Activated T-helper 2 cell treated with anti-CD3 and anti-CD28 coated beads, Interferon-gamma antibody, Interleukin-2, Interleukin-4, amounts not matched to agents 10 μg/mL and 5 μg/mL and 100 μg/mL, durations not matched to agents 14 hours and 24 hours and 36 hours (primary cell): ENCODE measurements at regions of chr2 and their contacts with region 1.

Region 1: DNA sequence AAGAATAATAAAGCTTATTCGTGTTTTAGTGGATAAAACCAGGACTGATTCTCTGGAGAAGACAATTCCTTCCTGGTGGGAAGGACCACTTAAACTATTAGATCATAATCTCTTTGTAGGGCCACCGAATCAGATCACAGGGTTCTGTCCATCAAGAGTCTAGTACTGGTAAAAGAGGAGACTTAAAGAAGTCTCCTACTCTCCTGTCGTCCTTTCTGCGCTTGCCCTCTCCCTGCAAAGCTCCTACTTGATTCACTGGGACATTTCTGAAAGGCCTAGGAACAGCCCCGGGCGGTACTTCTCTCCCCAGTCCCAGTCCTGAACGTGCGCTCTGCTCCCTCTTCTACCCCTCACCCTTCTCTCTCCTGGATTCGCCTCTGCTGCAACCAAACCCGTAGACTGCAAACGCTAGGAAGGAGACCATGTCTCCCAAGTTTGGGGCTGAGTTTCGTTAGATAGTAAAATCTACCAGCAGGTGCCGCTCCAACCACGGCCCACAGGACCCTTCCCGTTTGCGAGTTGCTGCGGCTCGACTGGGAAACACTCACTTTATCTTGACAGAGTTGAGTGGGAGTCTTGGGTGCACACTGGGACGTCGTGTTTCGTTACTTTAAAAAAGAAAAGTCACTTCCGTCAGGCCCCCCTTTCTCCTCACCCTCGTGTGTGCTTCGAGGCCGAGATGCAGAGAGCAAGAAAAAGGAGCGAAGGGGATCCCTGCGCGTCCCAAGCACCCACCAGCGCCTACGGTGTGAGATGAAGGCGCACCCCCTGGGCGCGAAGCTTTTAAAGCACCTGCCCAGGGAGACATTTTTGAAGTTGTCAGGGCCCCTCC is 923 bp downstream of the FIGLA start:
- DNase-seq: peak; percentile 60
- H3K4me3 Mint-ChIP-seq: peak overlapping the region; percentile 67
- H3K27ac Mint-ChIP-seq: no peak overlapping the region
- H3K4me1 Mint-ChIP-seq: peaks cover 12% of the 10 kb centered on the region
- H3K27me3 Mint-ChIP-seq: peaks cover 62% of the 10 kb centered on the region

Region 2: DNA sequence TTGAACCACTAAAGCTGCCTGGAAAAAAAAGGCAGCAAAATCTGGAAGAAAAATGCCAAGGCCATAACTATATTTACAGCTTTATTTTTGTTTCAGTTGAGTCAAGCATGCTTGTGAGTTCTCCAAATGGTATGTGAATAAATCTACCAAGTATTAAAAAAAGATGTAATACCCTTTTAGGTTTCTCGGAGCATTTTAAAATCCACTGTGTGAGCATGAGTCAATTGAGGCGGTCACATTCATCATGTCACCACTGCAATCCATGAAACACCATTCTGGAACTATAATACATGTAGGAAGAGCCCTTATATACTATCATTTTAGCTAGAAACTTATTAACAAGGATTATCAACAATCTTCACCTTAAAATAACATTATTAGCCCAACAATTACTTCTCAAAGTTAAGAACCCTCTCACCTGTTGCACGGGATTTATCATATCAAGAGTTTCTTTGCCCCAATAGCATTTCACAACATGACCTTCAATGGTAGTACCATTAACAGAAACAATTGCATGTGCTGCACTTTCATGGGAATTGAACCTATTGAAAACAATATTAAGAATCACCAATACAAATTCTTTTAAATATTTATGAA is 574.5 kb before region 1 on chr2:
- intact Hi-C with region 1: no loop called
- DNase-seq: no peak
- H3K4me3 Mint-ChIP-seq: no peak overlapping the region
- H3K27ac Mint-ChIP-seq: no peak overlapping the region
- H3K4me1 Mint-ChIP-seq: peaks cover 19% of the 10 kb centered on the region
- H3K27me3 Mint-ChIP-seq: no peaks in the 10 kb centered on the region

Region 3: GRCh38 chr2:70301344-70302194 is 488.0 kb before region 1 on chr2 and contains the start of gene FAM136A:
- intact Hi-C with region 1: loop called (anchors 10 kb)
- DNase-seq: peak; percentile 86
- H3K4me3 Mint-ChIP-seq: peak within 1 kb of the TSS; percentile 88
- H3K27ac Mint-ChIP-seq: peak within 1 kb of the TSS; percentile 90
- H3K4me1 Mint-ChIP-seq: peaks cover 31% of the 10 kb centered on the region
- H3K27me3 Mint-ChIP-seq: no peaks in the 10 kb centered on the region
- total RNA-seq, gene FAM136A: 71.3 and 71.8 TPM in 2 replicates

Region 4: GRCh38 chr2:70553584-70554337 is 235.8 kb before region 1 on chr2 and contains the start of gene TGFA:
- intact Hi-C with region 1: loop called (anchors 10 kb)
- DNase-seq: peak; percentile 54
- H3K4me3 Mint-ChIP-seq: peak within 1 kb of the TSS; percentile 73
- H3K27ac Mint-ChIP-seq: no peak within 1 kb of the TSS
- H3K4me1 Mint-ChIP-seq: peaks cover 17% of the 10 kb centered on the region
- H3K27me3 Mint-ChIP-seq: peaks cover 60% of the 10 kb centered on the region
- total RNA-seq, gene TGFA: not detected in 2 replicates

Region 5: GRCh38 chr2:70656421-70657010 is 133.0 kb before region 1 on chr2:
- intact Hi-C with region 1: loop called (anchors 1 kb)
- DNase-seq: no peak
- H3K4me3 Mint-ChIP-seq: no peak overlapping the region
- H3K27ac Mint-ChIP-seq: no peak overlapping the region
- H3K4me1 Mint-ChIP-seq: peaks cover 15% of the 10 kb centered on the region
- H3K27me3 Mint-ChIP-seq: peaks cover 27% of the 10 kb centered on the region

Region 6: GRCh38 chr2:70748002-70748784 is 41.3 kb before region 1 on chr2:
- intact Hi-C with region 1: no loop called
- DNase-seq: no peak
- H3K4me3 Mint-ChIP-seq: no peak overlapping the region
- H3K27ac Mint-ChIP-seq: no peak overlapping the region
- H3K4me1 Mint-ChIP-seq: no peaks in the 10 kb centered on the region
- H3K27me3 Mint-ChIP-seq: peaks cover 4% of the 10 kb centered on the region

Region 7: DNA sequence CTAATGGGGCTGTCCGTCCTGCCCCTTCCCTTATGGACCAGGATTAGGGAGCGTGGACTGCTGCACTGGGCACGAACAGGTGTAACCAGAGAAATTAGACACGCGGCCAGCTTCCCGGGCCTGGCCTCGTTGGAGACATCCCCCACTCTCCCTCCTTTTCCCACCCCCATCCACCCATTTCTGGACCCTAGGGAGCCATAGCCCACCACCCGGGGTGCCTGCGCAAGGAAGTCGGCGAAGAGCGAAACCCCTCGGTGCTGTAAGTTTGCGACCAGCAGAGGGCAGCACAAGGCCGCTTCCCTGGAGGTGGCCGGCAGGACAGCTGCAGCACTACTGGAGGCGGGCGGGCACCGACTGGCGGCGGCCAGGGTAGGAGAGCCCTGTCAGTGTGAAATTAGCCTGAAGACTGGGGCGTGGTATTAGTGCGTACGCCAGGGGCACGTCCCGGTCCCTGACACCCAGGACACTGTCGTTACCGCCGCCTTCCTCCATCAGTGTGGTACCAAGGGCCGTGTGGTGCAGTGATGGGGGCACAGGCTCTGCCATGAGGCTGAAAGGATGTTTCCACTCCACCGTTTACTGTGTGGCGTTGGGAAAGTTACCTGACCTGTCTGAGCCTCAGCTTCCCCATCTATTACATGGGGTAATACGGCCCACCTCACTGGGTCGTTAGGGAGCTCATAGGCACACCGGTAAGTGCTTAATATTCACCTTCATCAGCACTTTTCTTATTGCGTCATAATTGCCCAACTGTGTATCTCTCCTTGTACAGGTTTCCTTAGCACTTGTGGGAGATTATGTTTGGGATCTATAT is 82.1 kb after region 1 on chr2:
- intact Hi-C with region 1: loop called (anchors 5 kb)
- DNase-seq: peak; percentile 68
- H3K4me3 Mint-ChIP-seq: no peak overlapping the region
- H3K27ac Mint-ChIP-seq: no peak overlapping the region
- H3K4me1 Mint-ChIP-seq: no peaks in the 10 kb centered on the region
- H3K27me3 Mint-ChIP-seq: peaks cover 28% of the 10 kb centered on the region

Region 8: GRCh38 chr2:70919672-70920366 is 130.3 kb after region 1 on chr2:
- intact Hi-C with region 1: loop called (anchors 1 kb)
- DNase-seq: peak; percentile 51
- H3K4me3 Mint-ChIP-seq: no peak overlapping the region
- H3K27ac Mint-ChIP-seq: no peak overlapping the region
- H3K4me1 Mint-ChIP-seq: no peaks in the 10 kb centered on the region
- H3K27me3 Mint-ChIP-seq: peaks cover 14% of the 10 kb centered on the region

Region 9: DNA sequence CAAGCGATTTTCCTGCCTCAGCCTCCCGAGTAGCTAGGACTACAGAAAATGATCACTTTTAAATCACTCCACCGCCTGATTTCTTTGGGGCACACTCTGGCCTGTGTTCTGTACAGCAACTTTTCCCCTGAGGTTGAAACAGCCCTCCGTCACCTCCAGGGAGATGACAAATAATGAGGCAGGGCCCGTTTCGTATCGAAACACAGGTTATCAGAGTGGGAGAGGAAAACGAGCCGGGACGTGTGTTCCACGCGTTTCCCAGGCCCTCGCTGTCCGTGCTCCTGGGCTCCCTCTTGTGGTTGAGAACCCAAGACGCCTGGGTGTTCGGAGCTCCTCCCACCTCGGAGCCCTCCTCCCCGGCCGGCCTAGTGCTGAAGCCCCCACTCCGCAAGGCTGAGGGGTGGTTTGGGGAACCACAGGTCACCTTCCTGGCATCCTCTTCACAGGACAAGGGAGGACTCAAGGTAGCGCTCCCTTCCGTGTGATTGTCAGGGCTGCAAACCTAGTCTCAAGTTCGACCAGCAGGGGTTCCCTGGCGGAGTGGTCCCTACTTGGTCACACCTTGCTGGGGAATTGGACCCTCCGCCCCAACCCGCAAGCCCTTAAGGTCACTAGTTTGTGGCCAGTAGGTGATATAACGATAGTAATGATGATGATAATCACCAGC is 158.9 kb after region 1 on chr2:
- intact Hi-C with region 1: loop called (anchors 1 kb)
- DNase-seq: peak; percentile 62
- H3K4me3 Mint-ChIP-seq: peak overlapping the region; percentile 56
- H3K27ac Mint-ChIP-seq: no peak overlapping the region
- H3K4me1 Mint-ChIP-seq: peaks cover 15% of the 10 kb centered on the region
- H3K27me3 Mint-ChIP-seq: peaks cover 27% of the 10 kb centered on the region

Region 10: GRCh38 chr2:71043531-71044407 is 254.2 kb after region 1 on chr2:
- intact Hi-C with region 1: no loop called
- DNase-seq: no peak
- H3K4me3 Mint-ChIP-seq: no peak overlapping the region
- H3K27ac Mint-ChIP-seq: no peak overlapping the region
- H3K4me1 Mint-ChIP-seq: no peaks in the 10 kb centered on the region
- H3K27me3 Mint-ChIP-seq: no peaks in the 10 kb centered on the region

Region 11: DNA sequence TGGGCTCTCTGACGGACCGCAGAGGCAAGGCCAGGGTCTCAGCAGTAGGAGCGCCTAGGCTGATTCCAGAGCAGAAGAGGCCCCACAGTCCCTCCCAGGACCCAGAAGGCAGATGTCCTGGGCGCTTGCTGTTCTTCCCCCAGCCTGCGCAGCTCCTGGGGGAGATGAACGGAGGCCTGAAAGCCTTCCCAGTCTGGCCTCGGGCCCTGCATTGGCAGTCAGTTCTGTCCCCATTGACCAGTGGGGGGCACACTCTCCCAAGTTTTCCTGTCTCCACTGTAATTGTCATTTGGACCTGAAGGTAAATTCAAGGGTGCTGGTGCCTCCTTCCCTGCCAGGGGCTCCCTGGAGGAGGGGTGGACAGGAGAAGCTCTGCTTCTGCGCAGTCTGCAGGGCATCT is 1012.4 kb after region 1 on chr2:
- intact Hi-C with region 1: no loop called
- DNase-seq: no peak
- H3K4me3 Mint-ChIP-seq: no peak overlapping the region
- H3K27ac Mint-ChIP-seq: no peak overlapping the region
- H3K4me1 Mint-ChIP-seq: no peaks in the 10 kb centered on the region
- H3K27me3 Mint-ChIP-seq: no peaks in the 10 kb centered on the region